GM12878 (cell line): ENCODE measurements at regions of chr4 and their contacts with region 1.

Region 1: GRCh38 chr4:98143001-98143899 is at the start of gene STPG2:
- DNase-seq: peak; percentile 51
- ATAC-seq: peak; percentile 100
- H3K4me3 ChIP-seq: peak within 1 kb of the TSS; percentile 75
- H3K27ac ChIP-seq: peak within 1 kb of the TSS; percentile 92
- H3K4me1 ChIP-seq: peaks cover 3% of the 10 kb centered on the region
- H3K27me3 ChIP-seq: peaks cover 0 to 2% of the 10 kb centered on the region in 2 experiments; a peak in 1 of 4 replicates
- CTCF ChIP-seq: peak; percentile 33 to 55 (median 44)
- EP300 ChIP-seq: no peak
- POLR2A ChIP-seq: peak; percentile 79
- RAD21 ChIP-seq: 0 out of 2 replicates have a peak, but pooled peaks have one; percentile 12
- polyA plus RNA-seq, gene STPG2: not detected

Region 2: DNA sequence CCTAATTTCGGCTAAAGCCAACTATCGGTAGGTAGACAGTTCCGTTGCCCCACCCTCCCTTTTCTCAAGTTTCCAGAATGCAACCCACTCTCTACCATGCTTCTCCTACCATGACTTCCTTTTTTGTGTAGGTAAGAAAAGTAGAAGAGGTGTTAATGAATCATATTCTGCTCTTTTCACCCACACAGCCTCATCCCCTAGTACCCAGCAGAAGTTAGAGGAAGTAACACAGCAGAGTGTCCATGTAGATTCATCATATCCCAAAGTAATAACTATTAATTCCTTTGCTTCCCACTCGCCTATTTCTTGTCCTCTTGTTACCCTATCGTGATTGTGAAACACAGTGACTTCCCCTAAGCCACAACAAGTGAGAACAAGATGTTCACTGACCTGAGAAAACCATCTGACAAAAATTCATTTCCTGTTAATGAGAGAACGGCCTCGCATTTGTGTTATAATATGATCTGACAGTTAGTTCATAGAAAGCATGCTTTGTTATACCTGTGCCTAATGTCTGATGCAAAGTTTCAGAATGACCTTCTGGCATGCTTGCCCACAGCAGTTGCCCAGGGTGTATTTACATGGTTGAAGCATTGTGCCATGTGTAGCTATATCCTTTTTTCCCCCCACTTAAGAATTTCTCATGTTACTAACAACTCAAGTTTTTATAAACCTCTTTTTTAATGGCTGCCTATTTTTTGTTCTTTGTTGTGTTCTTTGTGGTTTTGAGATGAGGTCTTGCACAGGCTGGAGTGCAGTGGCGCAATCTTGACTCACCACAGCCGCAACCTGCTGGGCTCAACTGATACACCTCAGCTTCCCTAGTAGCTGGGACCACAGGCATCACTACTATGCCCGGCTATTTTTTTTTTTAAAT is 303.5 kb after region 1 on chr4:
- CTCF ChIA-PET with region 1: interaction called, 3 read pairs
- POLR2A ChIA-PET with region 1: no interaction called
- RAD21 ChIA-PET with region 1: no interaction called
- SMC1A ChIA-PET with region 1: no interaction called
- in situ Hi-C with region 1: no loop called
- intact Hi-C with region 1: loop called (anchors 5 kb)
- DNase-seq: peak; percentile 61
- ATAC-seq: peak; percentile 93
- H3K4me3 ChIP-seq: no peak overlapping the region
- H3K27ac ChIP-seq: peak overlapping the region; percentile 36
- H3K4me1 ChIP-seq: peaks cover 17% of the 10 kb centered on the region
- H3K27me3 ChIP-seq: no peaks in the 10 kb centered on the region
- CTCF ChIP-seq: no peak
- EP300 ChIP-seq: peak in 1 of 2 experiments; percentile 68; a peak in 2 of 4 replicates
- POLR2A ChIP-seq: no peak
- RAD21 ChIP-seq: no peak

Region 3: GRCh38 chr4:98658287-98659105 is 515.2 kb after region 1 on chr4 and contains the start of gene TSPAN5:
- CTCF ChIA-PET with region 1: no interaction called
- POLR2A ChIA-PET with region 1: no interaction called
- RAD21 ChIA-PET with region 1: no interaction called
- SMC1A ChIA-PET with region 1: no interaction called
- in situ Hi-C with region 1: no loop called
- intact Hi-C with region 1: loop called (anchors 10 kb)
- DNase-seq: no peak
- ATAC-seq: peak; percentile 84
- H3K4me3 ChIP-seq: peak within 1 kb of the TSS; percentile 65
- H3K27ac ChIP-seq: no peak within 1 kb of the TSS
- H3K4me1 ChIP-seq: peaks cover 10% of the 10 kb centered on the region
- H3K27me3 ChIP-seq: peaks cover 4 to 23% of the 10 kb centered on the region in 2 experiments
- CTCF ChIP-seq: no peak
- EP300 ChIP-seq: no peak
- POLR2A ChIP-seq: peak; percentile 33; the same call in 1 of the 2 replicates
- RAD21 ChIP-seq: no peak
- polyA plus RNA-seq, gene TSPAN5: 0.22 to 0.23 TPM

Region 4: GRCh38 chr4:98845960-98846359 is 702.7 kb after region 1 on chr4:
- CTCF ChIA-PET with region 1: no interaction called
- POLR2A ChIA-PET with region 1: no interaction called
- RAD21 ChIA-PET with region 1: interaction called, 3 read pairs
- SMC1A ChIA-PET with region 1: no interaction called
- in situ Hi-C with region 1: no loop called
- intact Hi-C with region 1: loop called (anchors 10 kb)
- DNase-seq: no peak
- ATAC-seq: no peak
- H3K4me3 ChIP-seq: no peak overlapping the region
- H3K27ac ChIP-seq: no peak overlapping the region
- H3K4me1 ChIP-seq: no peaks in the 10 kb centered on the region
- H3K27me3 ChIP-seq: no peaks in the 10 kb centered on the region
- CTCF ChIP-seq: no peak
- EP300 ChIP-seq: no peak
- POLR2A ChIP-seq: no peak
- RAD21 ChIP-seq: no peak

Region 5: DNA sequence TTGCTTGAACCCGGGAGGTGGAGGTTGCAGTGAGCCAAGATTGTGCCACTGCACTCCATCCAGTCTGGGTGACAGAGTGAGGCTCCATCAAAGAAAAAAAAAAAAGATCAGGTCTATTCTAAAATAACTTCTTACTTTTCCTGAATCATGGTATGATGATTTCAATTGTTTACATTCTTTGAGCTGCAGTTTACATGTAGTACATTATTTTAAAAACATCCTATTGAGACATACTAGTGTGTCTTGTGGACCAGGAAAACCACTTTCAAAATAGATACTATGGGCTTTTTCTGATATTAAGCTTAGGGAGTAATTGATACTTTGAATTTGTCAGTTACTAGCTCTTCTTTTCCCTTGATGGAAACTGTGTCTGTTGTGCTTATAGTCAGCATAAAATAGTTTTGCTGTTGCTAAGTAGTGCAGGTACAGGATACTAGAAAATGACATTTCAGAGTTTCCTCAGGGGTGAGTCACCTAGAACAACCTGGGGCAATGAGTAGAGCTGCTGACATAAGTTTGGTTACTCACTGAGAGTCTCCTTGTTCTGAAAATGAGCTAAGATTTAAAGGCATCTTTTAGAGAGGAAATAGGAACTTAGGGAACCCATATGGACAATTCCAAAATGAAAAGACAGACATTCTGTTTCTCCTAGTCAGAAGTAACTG is 1567.6 kb after region 1 on chr4:
- CTCF ChIA-PET with region 1: no interaction called
- POLR2A ChIA-PET with region 1: no interaction called
- RAD21 ChIA-PET with region 1: no interaction called
- SMC1A ChIA-PET with region 1: no interaction called
- in situ Hi-C with region 1: no loop called
- intact Hi-C with region 1: no loop called
- DNase-seq: no peak
- ATAC-seq: no peak
- H3K4me3 ChIP-seq: no peak overlapping the region
- H3K27ac ChIP-seq: no peak overlapping the region
- H3K4me1 ChIP-seq: no peaks in the 10 kb centered on the region
- H3K27me3 ChIP-seq: no peaks in the 10 kb centered on the region; a peak in 1 of 4 replicates
- CTCF ChIP-seq: no peak
- EP300 ChIP-seq: no peak
- POLR2A ChIP-seq: no peak
- RAD21 ChIP-seq: no peak